Dendritic cell treated with granulocyte-macrophage colony-stimulating factor and Interleukin-4, amounts not matched to agents 40 ng/mL and 50 ng/mL, for 4 days (primary cell): ENCODE measurements at regions of chr12 and their contacts with region 1.

Region 1: DNA sequence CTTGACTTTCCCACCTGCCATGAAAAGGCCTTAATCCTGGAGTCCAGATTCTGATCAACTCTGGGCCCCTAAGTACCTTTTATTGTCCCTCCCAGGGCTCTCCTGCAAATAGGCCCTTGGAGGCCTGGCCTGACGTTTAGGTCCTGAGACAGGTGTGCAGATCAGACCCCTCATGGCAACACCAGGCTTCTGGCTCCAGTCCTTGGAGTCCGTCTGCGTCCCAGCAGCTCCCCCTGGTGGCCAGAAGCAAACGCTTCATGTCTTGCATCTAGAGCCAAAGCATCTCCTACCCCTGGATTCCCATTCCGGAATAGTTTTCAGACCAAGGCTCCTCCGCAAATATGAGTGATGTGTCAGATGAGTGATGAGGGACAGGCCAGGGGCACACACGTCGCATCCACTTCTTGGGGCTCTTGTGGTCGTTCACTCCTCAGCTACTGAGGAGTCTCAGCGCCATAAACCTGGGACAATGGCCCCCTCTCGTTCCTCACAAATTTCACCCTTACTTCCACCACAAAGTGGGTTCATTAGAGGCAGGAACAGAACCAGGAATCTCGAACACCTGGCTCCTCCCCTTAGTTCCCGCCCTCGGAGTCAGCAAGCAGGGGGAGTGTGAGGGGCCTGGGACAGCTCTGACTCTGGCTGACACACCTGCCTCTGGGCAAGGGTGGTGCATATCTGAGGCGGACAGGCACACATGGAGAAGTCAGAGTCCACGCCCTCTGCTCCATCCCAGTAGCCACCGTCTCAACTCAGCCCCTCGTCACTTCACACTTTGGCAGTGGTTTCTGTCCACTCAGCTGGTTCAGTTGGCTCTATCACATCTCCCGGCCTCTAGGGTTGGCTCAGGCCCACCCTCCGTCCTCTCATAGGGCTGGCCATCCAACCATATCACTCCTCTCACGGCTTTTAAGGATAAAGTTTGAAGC is 77.9 kb upstream of the PWP1 start:
- H3K4me3 Mint-ChIP-seq: no peak overlapping the region
- H3K27ac Mint-ChIP-seq: no peak overlapping the region
- H3K4me1 Mint-ChIP-seq: no peaks in the 10 kb centered on the region
- H3K27me3 Mint-ChIP-seq: no peaks in the 10 kb centered on the region

Region 2: DNA sequence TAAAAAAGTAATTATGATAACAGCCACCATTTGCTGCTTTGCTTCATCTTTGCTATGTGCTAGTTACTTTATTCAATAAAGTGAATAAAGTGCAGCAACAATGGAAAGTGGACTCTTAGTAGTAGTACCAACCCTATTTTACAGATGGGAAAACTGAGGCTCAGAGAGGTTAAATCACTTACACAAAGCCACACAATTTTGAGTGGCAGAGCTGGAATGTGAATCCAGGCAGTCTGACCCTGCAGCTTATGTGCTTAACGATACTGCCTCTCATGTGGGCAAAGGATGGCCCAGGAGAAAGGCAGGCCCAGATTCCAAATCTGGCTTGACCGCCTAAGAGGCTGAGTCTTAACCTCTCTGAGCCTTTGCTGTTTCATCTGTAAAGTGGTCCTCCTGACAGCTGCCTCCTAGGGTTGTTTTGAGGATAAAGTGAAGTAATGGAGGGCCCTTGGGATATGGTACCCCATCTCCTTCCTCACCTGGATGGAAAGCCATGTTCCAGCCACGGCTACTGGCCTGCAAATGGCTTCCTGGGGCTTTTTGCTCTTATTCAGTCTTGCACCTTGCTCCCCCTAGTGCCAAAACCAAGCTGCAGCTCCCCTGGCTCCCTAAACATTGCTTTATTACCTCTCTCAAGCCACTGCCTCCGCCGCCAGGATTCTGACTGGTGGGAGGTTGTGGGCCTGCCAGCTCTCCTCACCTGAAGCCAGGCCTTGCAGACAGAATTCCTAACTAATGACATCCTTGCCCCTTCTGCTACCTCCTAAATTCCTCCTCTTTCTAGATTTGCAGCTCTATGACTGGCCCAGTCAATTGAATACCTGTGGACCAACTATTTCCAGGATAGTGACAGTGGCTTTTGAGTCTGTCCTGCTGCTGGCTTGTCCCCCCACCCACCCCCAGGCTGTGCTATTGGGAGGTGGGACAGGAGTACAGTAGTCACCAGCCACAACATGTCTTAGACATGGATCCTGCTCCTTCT is 205.4 kb before region 1 on chr12:
- intact Hi-C with region 1: loop called (anchors 1 kb)
- H3K4me3 Mint-ChIP-seq: no peak overlapping the region
- H3K27ac Mint-ChIP-seq: no peak overlapping the region
- H3K4me1 Mint-ChIP-seq: peaks cover 11% of the 10 kb centered on the region
- H3K27me3 Mint-ChIP-seq: no peaks in the 10 kb centered on the region

Region 3: GRCh38 chr12:107436376-107436775 is 171.4 kb before region 1 on chr12:
- intact Hi-C with region 1: no loop called
- H3K4me3 Mint-ChIP-seq: no peak overlapping the region
- H3K27ac Mint-ChIP-seq: no peak overlapping the region
- H3K4me1 Mint-ChIP-seq: no peaks in the 10 kb centered on the region
- H3K27me3 Mint-ChIP-seq: no peaks in the 10 kb centered on the region